ENCODE measurements at regions of chr20 and their contacts with region 1.

Region 1: GRCh38 chr20:31738729-31739561 is at the start of gene TPX2:
- DNase-seq: peak; percentile 96 to 97
- H3K4me3 ChIP-seq: peak within 1 kb of the TSS; percentile 57 to 61
- H3K27ac ChIP-seq: peak within 1 kb of the TSS; percentile 73 to 79
- H3K4me1 ChIP-seq: peaks cover 0 to 10% (median 5%) of the 10 kb centered on the region in 4 donors
- H3K27me3 ChIP-seq: no peaks in the 10 kb centered on the region
- CTCF ChIP-seq: peak; percentile 21 to 39

Region 2: DNA sequence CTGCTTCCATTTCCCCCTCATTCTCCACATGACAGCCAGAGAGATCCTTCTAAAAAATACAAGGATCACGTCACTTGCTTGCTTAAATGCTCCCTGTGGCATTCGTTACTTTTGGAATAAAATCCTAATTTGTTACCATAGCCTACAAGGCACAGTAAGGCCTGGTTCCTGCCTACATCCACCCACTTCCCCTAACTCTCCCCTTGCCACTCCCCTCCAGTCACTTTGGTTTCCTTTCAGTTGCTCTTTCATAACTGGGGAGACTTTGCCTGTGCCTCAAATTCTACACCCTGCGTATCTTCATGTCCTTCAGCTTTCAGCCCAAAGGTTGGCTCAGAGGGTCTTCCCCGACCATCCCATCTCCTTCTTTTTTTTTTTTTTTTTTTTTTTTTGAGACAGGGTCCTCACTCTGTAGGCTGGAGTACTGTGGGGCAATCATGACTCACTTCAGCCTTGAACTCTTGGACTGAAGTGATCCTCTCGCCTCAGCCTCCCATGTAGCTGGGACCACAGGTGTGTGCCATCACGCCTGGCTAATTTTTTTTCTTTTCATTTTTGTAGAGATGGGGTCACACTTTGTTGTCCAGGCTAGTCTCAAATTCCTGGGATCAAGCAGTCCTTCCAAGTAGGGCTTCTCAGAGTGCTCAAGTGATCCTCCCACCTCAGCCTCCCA is 121.4 kb before region 1 on chr20:
- intact Hi-C with region 1: no loop called
- DNase-seq: no peak
- H3K4me3 ChIP-seq: no peak overlapping the region
- H3K27ac ChIP-seq: no peak overlapping the region
- H3K4me1 ChIP-seq: peaks cover 0 to 14% (median 9%) of the 10 kb centered on the region in 4 donors
- H3K27me3 ChIP-seq: no peaks in the 10 kb centered on the region
- CTCF ChIP-seq: no peak

Region 3: DNA sequence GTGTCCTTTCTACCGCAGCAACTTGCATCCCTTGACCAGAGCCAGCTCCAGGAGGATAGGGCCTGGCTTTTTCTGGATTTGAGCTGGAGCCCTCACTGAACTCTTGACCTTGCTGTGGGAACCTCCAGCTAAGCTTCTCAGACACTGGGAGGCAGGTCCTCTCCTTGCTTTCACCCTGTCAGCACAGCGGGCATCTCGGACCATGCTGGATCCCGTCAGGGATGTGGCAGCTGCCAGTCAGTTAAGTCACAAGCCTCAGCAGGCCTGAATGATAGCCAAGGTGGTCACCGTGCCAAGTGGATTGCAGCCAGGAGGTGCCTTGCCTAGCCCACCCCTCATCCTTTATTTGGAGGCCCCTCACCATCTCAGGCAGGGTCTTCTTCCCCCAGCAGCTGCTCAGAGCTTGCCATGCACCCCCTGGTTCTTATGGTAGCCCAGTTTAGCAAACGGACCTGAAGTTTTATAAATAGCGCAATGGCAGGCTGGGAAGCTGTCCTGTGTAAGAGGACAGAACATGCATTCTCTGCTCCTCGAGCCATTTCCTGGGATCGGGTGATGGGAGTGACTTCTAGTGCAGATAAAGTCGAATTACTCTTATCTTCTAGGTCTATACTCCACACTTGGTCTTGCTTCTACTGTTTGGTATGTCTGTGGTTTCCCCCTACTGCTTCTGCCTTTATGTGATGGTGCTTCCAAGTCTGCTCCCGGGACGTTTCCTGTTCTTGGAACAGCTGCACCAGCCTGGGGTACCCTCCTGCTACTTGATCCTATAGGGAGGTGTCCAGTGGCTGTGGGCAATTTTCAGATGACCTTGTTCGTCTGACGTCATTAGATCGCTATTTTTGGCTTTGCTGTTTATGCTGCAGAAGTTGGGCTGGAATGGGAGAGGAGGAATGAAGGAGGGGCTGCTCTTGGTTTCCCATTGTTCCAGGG is 73.1 kb after region 1 on chr20:
- intact Hi-C with region 1: loop called (anchors 10 kb)
- DNase-seq: peak in 1 of 2 donors; percentile 83
- H3K4me3 ChIP-seq: no peak overlapping the region
- H3K27ac ChIP-seq: peak overlapping the region; percentile 83 to 87
- H3K4me1 ChIP-seq: peaks cover 0 to 97% (median 74%) of the 10 kb centered on the region in 4 donors
- H3K27me3 ChIP-seq: no peaks in the 10 kb centered on the region
- CTCF ChIP-seq: no peak

Region 4: DNA sequence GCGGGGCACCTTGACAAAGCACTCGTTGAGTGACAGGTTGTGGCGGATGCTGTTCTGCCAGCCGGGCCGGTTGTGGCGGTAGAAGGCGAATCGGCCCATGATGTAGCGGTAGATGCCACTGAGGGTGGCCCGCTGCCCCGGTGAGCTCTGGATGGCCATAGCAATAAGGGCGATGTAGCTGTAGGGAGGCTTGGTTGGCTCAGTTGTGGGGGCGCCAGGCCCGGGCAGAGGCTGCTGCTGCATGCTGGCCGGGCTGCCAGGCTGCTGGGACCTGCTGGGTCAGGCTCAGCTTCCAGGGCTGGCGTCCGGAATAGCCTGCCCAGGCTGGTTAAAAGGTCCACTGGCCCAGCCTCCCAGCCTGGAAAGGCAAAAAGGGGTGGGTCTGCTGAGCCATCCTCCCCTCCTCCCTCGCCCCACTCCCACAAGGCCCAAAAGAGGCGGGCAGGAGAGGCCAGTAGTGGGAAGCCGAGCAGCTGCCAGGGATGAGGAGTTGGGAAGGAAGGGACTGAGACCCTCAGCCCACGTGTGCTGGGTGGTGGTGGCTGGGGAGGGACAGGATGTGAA is 106.4 kb after region 1 on chr20 and contains the start of gene FOXS1:
- intact Hi-C with region 1: loop called (anchors 5 kb)
- DNase-seq: peak; percentile 74 to 95
- H3K4me3 ChIP-seq: peak within 1 kb of the TSS; percentile 62 to 73
- H3K27ac ChIP-seq: peak within 1 kb of the TSS; percentile 89 to 92
- H3K4me1 ChIP-seq: peaks cover 0 to 67% (median 49%) of the 10 kb centered on the region in 4 donors
- H3K27me3 ChIP-seq: peaks cover 0 to 12% of the 10 kb centered on the region in 2 donors
- CTCF ChIP-seq: no peak